Body of pancreas (tissue), 4 donors: ENCODE measurements at regions of chr10 and their contacts with region 1.

Region 1: GRCh38 chr10:103423748-103424147 is 27.3 kb downstream of the PDCD11 start:
- DNase-seq: no peak
- ATAC-seq: no peak
- H3K4me3 ChIP-seq: no peak overlapping the region
- H3K27ac ChIP-seq: no peak overlapping the region
- H3K4me1 ChIP-seq: no peaks in the 10 kb centered on the region
- H3K27me3 ChIP-seq: no peaks in the 10 kb centered on the region
- CTCF ChIP-seq: no peak
- POLR2A ChIP-seq: no peak

Region 2: DNA sequence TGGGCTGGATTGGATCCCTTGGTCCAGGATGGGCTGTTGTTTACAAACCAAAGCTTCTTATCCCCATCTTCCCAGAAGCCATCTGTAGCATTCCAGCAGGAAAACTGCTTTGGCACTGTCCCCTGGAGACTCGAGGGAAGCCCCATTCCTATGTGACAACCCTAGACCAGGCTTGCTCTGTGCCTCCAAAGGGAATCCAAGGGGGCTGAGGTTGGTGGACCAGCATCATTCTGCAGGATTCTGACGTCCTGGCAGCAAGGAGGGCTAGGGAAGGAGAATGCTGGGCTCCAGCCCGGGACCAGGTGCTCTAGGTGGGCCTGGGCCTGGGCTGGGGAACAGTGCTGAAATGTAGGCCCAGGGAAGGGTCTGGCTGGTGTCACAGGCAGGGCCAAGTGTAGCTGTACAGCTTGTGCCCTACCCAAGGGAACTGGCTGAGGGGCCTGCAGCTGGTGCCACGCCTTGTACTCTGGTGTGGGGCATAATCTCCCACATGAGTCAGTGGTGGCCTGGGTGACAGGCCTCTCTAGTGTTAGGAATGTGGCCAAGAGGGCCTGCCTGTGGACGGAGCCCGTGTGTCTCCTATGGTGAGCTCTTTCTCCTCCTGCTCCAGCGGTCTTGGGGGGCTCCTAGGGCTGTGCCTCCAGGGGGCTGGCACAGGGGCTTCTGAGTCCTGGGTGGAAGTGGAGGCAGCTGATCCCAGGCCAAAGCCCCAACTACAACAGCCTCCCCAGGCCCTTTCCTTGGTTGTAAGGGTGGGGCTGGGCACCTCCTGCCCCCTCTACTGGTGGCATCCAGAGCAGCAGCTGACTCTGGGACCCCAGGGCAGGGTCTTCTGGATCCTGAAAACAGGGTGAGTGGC is 754.3 kb before region 1 on chr10:
- intact Hi-C with region 1: no loop called
- DNase-seq: peak; percentile 91 to 98 (median 94)
- ATAC-seq: peak; percentile 98
- H3K4me3 ChIP-seq: no peak overlapping the region
- H3K27ac ChIP-seq: peak overlapping the region; percentile 86 to 95 (median 94)
- H3K4me1 ChIP-seq: peaks cover 34% of the 10 kb centered on the region
- H3K27me3 ChIP-seq: no peaks in the 10 kb centered on the region
- CTCF ChIP-seq: peak in 6 of 7 experiments; percentile 18 to 66 (median 46)
- POLR2A ChIP-seq: peak; percentile 76 to 80 (median 78)

Region 3: DNA sequence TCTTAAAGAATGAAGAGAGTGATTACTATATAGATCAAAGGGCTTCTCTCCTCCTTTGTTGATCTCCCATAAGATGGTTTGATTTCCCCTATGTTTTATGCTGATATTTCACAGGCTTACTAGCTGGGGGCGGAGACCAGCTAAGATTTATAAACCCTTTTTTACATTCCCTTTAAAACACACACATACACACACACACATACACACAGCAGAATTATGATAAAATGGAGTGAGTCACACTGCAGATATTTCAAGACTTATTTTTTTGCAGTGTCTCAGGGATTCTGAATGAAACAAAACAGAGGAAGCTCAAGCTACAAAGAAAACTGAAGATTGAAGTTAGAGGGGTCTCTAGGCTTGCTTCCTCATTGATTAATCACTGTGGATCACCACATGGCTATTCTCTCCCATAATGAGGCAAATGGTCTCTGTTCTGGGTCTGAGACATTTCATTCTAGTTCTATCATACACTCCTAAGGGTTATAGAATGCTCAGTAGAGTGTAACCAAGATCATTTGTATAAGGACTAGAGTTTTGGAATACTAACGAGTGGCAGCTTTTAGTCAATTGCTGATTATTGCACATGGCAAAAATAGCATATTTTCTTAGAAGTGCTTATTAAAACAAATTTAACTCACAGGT is 128.3 kb before region 1 on chr10:
- intact Hi-C with region 1: no loop called
- DNase-seq: no peak
- ATAC-seq: no peak
- H3K4me3 ChIP-seq: no peak overlapping the region
- H3K27ac ChIP-seq: no peak overlapping the region
- H3K4me1 ChIP-seq: no peaks in the 10 kb centered on the region
- H3K27me3 ChIP-seq: no peaks in the 10 kb centered on the region
- CTCF ChIP-seq: no peak
- POLR2A ChIP-seq: no peak

Region 4: DNA sequence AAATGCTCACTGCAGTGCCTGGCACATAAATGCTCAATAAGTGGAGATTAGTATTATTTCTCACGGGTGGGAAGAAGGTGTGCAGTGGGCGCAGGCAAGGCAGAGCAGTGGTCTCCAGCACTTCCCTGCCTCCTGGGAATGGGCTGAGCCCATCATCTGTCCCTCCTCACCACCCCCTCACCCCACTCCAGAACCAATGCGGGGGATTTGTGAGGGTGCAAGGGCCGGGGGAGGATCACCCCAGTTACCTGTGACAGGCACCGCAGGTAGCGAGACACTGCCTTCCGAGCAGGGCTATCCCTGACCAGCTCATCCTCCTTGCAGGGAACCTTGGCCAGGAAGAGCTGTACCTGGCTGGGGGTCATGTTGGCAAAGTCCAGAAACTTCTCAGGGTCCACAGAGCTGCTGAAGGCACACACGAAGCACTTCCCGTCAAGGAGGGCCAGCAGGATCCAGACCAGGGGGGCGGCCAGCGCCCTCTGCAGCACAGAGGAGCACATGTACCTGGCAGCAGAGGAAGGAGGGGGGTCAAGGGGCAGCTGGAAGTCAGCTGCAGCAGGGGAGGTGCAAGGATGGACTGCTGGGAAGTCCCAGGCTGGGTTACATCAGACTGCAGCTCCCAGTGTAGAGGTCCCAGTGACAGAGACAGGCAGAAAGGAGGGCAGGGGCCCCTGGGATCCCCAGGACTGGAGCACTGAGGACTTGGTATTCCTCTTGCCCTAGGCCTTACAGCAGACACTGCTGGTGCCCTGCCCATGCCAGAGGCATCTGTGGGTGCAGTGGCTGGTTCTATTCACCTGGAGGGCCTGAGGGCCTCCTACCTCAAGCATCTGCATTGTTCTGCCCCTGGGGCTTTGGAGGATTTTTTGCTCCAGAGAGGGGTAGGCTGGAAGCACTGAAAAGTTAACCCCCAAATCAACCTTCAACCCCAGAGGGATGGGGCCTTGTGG is 52.6 kb after region 1 on chr10:
- intact Hi-C with region 1: loop called (anchors 5 kb)
- DNase-seq: no peak
- ATAC-seq: no peak
- H3K4me3 ChIP-seq: no peak overlapping the region
- H3K27ac ChIP-seq: no peak overlapping the region
- H3K4me1 ChIP-seq: peaks cover 8% of the 10 kb centered on the region
- H3K27me3 ChIP-seq: no peaks in the 10 kb centered on the region
- CTCF ChIP-seq: no peak
- POLR2A ChIP-seq: no peak

Region 5: GRCh38 chr10:104368381-104368780 is 944.6 kb after region 1 on chr10:
- intact Hi-C with region 1: no loop called
- DNase-seq: no peak
- ATAC-seq: no peak
- H3K4me3 ChIP-seq: no peak overlapping the region
- H3K27ac ChIP-seq: no peak overlapping the region
- H3K4me1 ChIP-seq: no peaks in the 10 kb centered on the region
- H3K27me3 ChIP-seq: no peaks in the 10 kb centered on the region
- CTCF ChIP-seq: no peak
- POLR2A ChIP-seq: no peak